Activated CD8-positive, alpha-beta T cell treated with anti-CD3 and anti-CD28 coated beads for 36 hours (primary cell): ENCODE measurements at regions of chr2 and their contacts with region 1.

Region 1: GRCh38 chr2:54704688-54705605 is 18.5 kb upstream of the EML6 start:
- DNase-seq: no peak
- ATAC-seq: peak; percentile 70
- H3K4me3 Mint-ChIP-seq: no peak overlapping the region
- H3K27ac Mint-ChIP-seq: no peak overlapping the region
- H3K4me1 Mint-ChIP-seq: peaks cover 14% of the 10 kb centered on the region
- H3K27me3 Mint-ChIP-seq: peaks cover 16% of the 10 kb centered on the region
- CTCF ChIP-seq: peak; percentile 70

Region 2: DNA sequence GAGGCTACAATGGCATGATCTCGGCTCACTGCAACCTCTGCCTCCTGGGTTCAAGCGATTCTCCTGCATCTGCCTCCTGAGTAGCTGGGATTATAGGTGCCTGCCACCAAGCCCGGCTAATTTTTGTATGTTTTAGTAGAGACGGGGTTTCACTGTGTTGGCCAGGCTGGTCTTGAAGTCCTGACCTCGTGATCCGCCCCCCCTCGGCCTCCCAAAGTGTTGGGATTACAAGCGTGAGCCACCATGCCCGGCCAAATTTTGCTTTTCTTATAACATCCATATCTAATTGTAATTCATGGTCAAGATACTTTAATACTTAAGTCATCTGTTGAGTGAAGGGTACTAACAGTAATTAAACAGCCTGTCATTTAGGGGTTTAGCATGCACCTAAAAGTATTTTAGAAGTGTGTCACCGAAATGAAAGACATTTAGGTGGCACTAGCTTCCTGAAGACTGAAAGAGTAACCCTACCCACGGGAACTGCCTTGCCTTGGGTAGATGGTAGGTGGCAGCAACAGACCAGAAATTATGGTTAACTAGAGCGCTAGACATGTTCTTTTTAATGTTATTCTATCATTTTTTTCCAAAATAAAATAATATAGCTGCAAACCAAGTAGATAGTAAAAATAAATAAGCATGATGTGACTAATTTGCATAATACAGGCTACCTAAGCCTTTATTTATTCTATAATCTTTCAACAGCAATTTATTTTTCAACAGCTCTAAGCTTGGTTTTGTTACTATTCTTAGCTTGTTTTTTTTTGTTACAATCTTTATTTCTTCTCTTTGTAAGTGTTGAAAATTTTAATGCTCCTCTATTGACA is 598.1 kb before region 1 on chr2:
- CTCF ChIA-PET with region 1: interaction called, 25 read pairs
- POLR2A ChIA-PET with region 1: no interaction called
- intact Hi-C with region 1: no loop called
- DNase-seq: peak; percentile 64
- ATAC-seq: peak; percentile 69
- H3K4me3 Mint-ChIP-seq: no peak overlapping the region
- H3K27ac Mint-ChIP-seq: no peak overlapping the region
- H3K4me1 Mint-ChIP-seq: peaks cover 7% of the 10 kb centered on the region
- H3K27me3 Mint-ChIP-seq: peaks cover 2% of the 10 kb centered on the region
- CTCF ChIP-seq: peak; percentile 68

Region 3: GRCh38 chr2:54531558-54531957 is 173.4 kb before region 1 on chr2:
- CTCF ChIA-PET with region 1: interaction called, 15 read pairs
- POLR2A ChIA-PET with region 1: no interaction called
- intact Hi-C with region 1: no loop called
- DNase-seq: no peak
- ATAC-seq: no peak
- H3K4me3 Mint-ChIP-seq: no peak overlapping the region
- H3K27ac Mint-ChIP-seq: no peak overlapping the region
- H3K4me1 Mint-ChIP-seq: peaks cover 3% of the 10 kb centered on the region
- H3K27me3 Mint-ChIP-seq: no peaks in the 10 kb centered on the region
- CTCF ChIP-seq: no peak

Region 4: GRCh38 chr2:54652540-54652939 is 52.4 kb before region 1 on chr2:
- CTCF ChIA-PET with region 1: interaction called, 71 read pairs
- POLR2A ChIA-PET with region 1: no interaction called
- intact Hi-C with region 1: no loop called
- DNase-seq: no peak
- ATAC-seq: peak; percentile 70
- H3K4me3 Mint-ChIP-seq: no peak overlapping the region
- H3K27ac Mint-ChIP-seq: peak overlapping the region; percentile 22
- H3K4me1 Mint-ChIP-seq: peaks cover 8% of the 10 kb centered on the region
- H3K27me3 Mint-ChIP-seq: no peaks in the 10 kb centered on the region
- CTCF ChIP-seq: no peak

Region 5: DNA sequence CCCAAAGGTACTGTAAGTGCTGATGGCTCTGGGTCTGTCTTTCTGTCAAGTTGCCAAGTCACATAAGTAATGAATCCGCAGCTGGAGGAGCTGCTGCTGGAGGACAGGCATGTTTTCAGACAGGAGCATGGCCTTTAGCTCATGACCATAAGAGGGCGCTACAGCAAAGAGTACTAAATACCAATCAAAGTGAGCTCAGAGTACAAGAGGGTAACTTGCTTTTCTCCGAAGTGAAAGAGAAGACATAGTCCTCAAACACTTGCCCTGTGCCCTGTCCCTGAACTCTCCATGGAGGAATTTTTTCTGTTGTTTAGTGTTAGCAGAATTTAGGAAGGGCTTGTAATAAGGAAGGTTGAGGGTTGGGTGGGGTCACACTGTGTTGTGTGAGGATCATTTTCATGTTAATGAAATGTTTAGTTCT is 39.5 kb before region 1 on chr2:
- CTCF ChIA-PET with region 1: interaction called, 218 read pairs
- POLR2A ChIA-PET with region 1: interaction called, 3 read pairs
- intact Hi-C with region 1: loop called (anchors 2 kb)
- DNase-seq: peak; percentile 75
- ATAC-seq: peak; percentile 89
- H3K4me3 Mint-ChIP-seq: no peak overlapping the region
- H3K27ac Mint-ChIP-seq: peak overlapping the region; percentile 82
- H3K4me1 Mint-ChIP-seq: peaks cover 8% of the 10 kb centered on the region
- H3K27me3 Mint-ChIP-seq: no peaks in the 10 kb centered on the region
- CTCF ChIP-seq: peak; percentile 72

Region 6: DNA sequence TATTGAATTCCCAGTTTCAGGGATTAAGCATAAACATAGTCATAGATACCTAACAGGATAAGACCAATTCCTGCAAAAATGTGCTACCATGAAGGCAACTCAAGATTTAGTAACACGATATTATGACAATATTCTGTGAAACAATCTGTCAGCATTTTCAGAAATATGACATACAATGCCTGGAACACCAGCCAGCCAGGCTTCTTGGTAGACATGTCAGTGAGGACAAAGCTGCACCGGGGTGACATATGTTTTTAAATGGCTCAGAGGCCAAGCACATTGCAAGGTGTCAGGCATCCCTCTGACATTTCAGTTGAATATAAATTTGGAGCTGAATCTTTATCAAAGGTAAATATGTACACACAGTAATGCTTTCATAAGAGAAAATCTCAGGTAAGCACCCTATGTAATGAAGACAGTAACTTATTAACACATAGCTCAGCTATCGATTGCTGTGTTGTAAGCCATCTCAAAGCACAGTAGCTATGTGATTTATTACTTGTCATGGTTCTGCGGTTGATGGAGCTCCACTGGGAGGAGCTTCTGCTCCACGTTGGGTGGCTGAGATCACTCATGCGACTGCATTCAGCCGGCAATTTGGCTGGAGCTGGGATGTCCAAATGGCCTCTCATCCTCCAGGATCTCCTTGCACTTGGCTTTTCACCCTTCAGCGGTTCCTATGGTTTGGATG is 13.4 kb before region 1 on chr2:
- CTCF ChIA-PET with region 1: interaction called, 34 read pairs
- POLR2A ChIA-PET with region 1: no interaction called
- intact Hi-C with region 1: no loop called
- DNase-seq: no peak
- ATAC-seq: no peak
- H3K4me3 Mint-ChIP-seq: no peak overlapping the region
- H3K27ac Mint-ChIP-seq: no peak overlapping the region
- H3K4me1 Mint-ChIP-seq: peaks cover 7% of the 10 kb centered on the region
- H3K27me3 Mint-ChIP-seq: peaks cover 1% of the 10 kb centered on the region
- CTCF ChIP-seq: no peak

Region 7: DNA sequence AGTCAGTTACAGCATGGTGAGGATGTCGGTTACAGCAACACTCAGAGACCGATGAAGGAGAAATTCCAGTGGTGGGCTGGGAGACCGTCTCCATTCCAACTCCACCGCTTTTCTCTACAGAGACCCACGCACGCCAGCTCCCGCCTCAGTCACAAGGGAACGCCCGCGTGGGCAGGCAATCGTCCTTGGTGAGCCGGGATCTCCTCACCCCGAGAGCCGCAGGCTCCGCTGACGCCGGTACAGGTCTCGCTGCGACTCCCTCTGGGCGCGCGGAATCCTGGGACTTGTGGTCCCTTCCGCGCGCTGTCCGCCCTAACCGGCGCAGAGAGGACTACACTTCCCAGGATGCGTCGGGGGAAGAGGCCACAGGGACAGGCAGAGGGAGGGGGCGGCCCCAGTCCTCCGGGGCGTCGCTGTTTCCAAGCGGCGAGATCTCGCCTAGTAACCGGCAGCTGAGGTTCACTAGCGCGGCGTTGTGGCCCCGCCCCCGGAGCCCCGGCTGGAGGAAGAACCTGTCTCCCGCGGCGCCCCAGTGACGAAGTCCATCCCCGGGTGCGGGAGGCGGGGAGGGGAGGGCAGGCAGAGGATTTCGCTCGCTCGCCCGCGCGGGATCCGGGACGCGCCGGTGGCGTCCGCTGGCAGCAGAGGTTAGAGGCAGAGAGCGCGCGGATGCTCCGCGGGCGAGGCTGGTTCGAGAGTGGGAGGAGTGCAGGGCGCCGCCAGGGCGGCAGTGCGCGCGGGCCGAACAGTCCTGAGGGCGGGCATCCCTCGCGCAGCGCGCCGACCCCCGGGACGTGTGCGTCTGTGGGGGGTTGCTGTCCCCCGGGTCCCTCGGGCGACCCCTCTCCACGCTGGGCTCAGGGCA is 18.4 kb after region 1 on chr2 and contains the start of gene EML6:
- CTCF ChIA-PET with region 1: interaction called, 17 read pairs
- POLR2A ChIA-PET with region 1: interaction called, 8 read pairs
- intact Hi-C with region 1: no loop called
- DNase-seq: peak; percentile 99
- ATAC-seq: peak; percentile 99
- H3K4me3 Mint-ChIP-seq: peak within 1 kb of the TSS; percentile 82
- H3K27ac Mint-ChIP-seq: peak within 1 kb of the TSS; percentile 70
- H3K4me1 Mint-ChIP-seq: peaks cover 15% of the 10 kb centered on the region
- H3K27me3 Mint-ChIP-seq: peaks cover 33% of the 10 kb centered on the region
- CTCF ChIP-seq: peak; percentile 28
- total RNA-seq, gene EML6: 1.2 to 1.7 TPM

Region 8: DNA sequence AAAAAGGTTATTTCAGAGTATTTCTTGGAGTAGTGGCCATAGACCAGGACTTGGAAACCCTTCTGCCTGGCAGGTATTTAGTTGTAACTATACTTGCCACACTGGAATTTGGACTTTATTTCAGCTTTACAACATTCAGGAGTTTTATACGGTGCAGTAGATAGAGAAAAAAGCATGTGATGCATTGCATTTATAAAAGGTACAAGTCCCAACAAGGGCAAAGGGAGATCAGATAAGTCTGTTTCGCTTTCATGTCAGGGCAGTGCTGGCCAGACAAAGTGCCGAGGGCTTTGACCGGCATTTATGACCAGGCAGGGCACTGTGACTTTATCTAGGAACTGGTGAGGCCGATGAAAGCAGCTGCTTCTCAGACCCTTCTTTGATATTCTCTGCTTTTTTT is 199.9 kb after region 1 on chr2:
- CTCF ChIA-PET with region 1: no interaction called
- POLR2A ChIA-PET with region 1: no interaction called
- intact Hi-C with region 1: no loop called
- DNase-seq: no peak
- ATAC-seq: no peak
- H3K4me3 Mint-ChIP-seq: no peak overlapping the region
- H3K27ac Mint-ChIP-seq: no peak overlapping the region
- H3K4me1 Mint-ChIP-seq: peaks cover 8% of the 10 kb centered on the region
- H3K27me3 Mint-ChIP-seq: no peaks in the 10 kb centered on the region
- CTCF ChIP-seq: no peak